Activated CD4-positive, alpha-beta T cell treated with anti-CD3 and anti-CD28 coated beads for 36 hours (primary cell): ENCODE measurements at regions of chr6 and their contacts with region 1.

Region 1: DNA sequence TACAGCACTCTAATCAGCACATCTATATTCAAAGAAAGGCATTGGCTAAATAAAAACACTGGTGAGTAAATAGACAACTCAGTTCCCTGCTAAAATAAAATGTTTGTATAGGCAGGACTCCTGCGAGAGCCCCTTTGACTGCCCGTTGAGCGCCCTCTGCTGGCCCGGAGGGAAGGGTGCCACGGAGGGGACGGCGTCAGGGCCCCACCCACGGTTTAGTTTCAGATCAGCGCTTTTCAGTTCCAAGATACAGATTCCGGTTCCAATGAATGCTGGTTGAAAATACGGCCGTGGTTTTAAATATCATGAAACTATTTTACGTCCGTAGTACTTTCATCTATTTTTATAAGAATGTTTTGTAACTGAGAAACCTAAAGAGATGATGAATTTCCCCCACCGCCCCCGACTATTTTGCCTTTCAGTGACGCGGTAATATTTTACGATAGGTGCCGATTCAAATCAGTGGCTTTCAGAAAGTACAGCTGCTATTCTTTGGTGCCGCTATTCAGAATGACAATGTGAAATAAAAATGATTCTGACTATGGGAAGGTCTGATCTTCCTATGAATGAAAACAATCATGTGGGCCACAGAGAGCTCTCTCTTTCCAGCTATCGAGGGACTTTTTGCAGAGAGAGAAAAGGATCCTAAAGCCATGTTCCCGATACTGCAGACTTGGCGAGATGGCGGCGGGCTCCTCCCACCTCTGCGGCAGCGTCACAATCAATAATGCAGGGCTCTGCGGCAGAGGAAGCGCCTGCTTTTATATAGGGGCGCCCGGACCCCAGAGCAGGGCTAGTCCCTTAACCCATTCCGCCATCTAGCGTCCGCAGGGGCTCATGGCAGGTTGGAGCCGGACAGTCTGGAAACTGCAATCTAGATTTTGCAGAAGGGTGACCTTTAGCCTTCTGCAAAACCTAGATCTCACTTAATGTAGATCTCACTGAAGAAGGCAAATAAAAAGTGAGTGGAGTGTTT is 10.6 kb upstream of the CCN6 start:
- DNase-seq: peak; percentile 96
- ATAC-seq: peak; percentile 91
- H3K4me3 Mint-ChIP-seq: peak overlapping the region; percentile 93
- H3K27ac Mint-ChIP-seq: peak overlapping the region; percentile 98
- H3K4me1 Mint-ChIP-seq: peaks cover 50% of the 10 kb centered on the region
- H3K27me3 Mint-ChIP-seq: no peaks in the 10 kb centered on the region

Region 2: GRCh38 chr6:111011360-111012142 is 1031.8 kb before region 1 on chr6:
- CTCF ChIA-PET with region 1: interaction called, 4 read pairs
- POLR2A ChIA-PET with region 1: no interaction called
- intact Hi-C with region 1: loop called in 1 of 2 experiments (anchors 5 kb)
- DNase-seq: no peak
- ATAC-seq: peak; percentile 73
- H3K4me3 Mint-ChIP-seq: no peak overlapping the region
- H3K27ac Mint-ChIP-seq: no peak overlapping the region
- H3K4me1 Mint-ChIP-seq: peaks cover 4% of the 10 kb centered on the region
- H3K27me3 Mint-ChIP-seq: no peaks in the 10 kb centered on the region

Region 3: GRCh38 chr6:111668410-111668809 is 374.9 kb before region 1 on chr6:
- CTCF ChIA-PET with region 1: no interaction called
- POLR2A ChIA-PET with region 1: no interaction called
- intact Hi-C with region 1: loop called in 1 of 2 experiments (anchors 5 kb)
- DNase-seq: no peak
- ATAC-seq: no peak
- H3K4me3 Mint-ChIP-seq: no peak overlapping the region
- H3K27ac Mint-ChIP-seq: peak overlapping the region; percentile 35
- H3K4me1 Mint-ChIP-seq: peaks cover 6% of the 10 kb centered on the region
- H3K27me3 Mint-ChIP-seq: no peaks in the 10 kb centered on the region

Region 4: DNA sequence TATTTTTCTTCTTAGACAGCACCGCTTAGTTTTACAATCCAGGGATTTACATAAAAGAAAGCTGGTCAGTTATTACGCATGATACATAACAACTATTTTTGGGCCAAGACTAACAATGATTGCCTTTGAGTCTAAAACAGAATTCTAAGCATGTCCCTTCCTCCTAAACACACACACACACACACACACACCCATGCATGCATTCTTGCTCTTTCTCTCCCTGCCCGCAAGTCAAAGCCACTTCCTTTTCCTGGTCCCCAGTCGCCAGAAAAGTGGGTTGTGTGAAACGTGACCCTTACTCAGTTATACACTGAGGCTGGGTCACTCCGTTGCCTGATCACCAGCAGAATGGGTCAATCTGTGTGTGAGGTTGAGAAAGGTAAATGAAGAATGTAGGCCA is 201.5 kb before region 1 on chr6:
- CTCF ChIA-PET with region 1: interaction called, 14 read pairs
- POLR2A ChIA-PET with region 1: no interaction called
- intact Hi-C with region 1: loop called in 1 of 2 experiments (anchors 1 kb)
- DNase-seq: peak; percentile 67
- ATAC-seq: no peak
- H3K4me3 Mint-ChIP-seq: no peak overlapping the region
- H3K27ac Mint-ChIP-seq: no peak overlapping the region
- H3K4me1 Mint-ChIP-seq: peaks cover 63% of the 10 kb centered on the region
- H3K27me3 Mint-ChIP-seq: no peaks in the 10 kb centered on the region

Region 5: DNA sequence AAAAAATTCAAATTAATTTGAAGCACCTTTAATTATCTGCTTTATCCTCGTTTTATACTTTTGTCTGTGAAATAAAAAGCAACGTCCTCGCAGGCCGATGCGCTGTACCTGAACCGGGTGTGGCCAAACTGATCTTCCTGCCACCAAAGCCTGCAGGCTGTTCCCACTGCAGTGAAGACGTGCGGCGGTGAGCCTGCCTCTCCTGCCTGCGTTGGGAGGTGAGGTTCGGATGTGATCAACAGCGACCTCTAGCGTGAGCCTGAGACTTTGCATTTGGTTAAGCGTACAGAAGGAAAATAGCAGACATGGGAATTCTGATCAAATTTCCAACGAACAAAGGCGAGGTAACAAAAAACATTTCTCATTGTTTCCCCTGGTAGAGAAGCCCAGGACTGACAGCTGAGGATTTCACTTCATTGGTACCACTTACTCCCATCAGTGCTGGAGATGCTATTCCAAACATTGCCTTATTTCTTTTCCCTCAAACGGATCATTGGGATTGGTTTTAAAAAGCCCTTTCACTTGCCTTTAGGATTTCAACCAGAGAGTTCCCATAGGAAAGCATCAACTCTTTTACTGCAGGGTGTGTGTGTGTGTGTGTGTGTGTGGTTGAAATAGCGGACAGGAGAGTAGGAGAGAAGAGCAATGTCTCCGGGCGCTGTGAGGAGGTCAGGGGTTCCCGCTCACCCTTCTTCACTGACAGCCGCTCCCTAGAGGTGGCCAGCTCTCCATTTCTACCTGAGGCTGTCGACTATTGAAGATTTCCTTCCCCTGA is 46.1 kb before region 1 on chr6:
- CTCF ChIA-PET with region 1: interaction called, 9 read pairs
- POLR2A ChIA-PET with region 1: interaction called, 6 read pairs
- intact Hi-C with region 1: loop called (anchors 1 to 5 kb)
- DNase-seq: peak; percentile 89
- ATAC-seq: peak; percentile 71
- H3K4me3 Mint-ChIP-seq: peak overlapping the region; percentile 43
- H3K27ac Mint-ChIP-seq: peak overlapping the region; percentile 72
- H3K4me1 Mint-ChIP-seq: peaks cover 51% of the 10 kb centered on the region
- H3K27me3 Mint-ChIP-seq: no peaks in the 10 kb centered on the region

Region 6: DNA sequence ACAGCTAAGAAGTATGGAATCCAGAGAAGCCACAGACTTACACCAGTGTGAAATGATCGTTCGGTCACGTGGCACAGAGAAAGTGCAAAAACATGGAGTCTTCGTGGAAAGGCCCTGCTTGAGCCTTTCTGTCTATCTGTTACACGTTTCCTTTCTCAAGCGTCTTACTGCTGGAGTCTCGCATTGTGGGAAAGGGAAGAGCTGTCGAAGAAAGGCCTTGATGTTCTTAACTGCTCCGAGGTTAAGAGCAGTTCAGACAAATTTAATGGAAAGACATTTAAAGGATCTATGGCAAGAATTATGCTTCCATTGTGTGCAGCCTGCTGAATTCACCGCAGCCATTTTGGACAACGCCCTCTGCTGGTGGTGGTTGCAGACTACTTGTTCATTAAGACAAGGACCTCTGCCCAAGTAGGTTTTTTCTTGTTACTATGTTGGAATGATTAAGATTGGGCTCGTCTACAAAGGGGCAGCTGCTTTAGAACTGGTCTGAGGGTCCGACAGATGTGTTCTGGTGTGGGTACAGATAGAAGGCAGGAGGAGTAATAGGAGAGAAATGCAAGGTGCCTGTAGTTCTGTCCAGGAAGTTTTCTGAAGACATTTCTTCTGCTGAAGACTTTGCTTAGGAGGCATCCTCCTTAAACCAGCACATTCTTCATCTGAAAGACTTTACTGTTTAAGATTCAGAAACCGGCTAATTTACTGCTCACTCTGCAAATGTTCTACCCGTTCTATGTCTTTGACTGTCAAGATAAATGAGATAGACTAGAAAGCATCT is 14.1 kb before region 1 on chr6:
- CTCF ChIA-PET with region 1: interaction called, 61 read pairs
- POLR2A ChIA-PET with region 1: no interaction called
- intact Hi-C with region 1: loop called in 1 of 2 experiments (anchors 1 kb)
- DNase-seq: peak; percentile 90
- ATAC-seq: peak; percentile 20
- H3K4me3 Mint-ChIP-seq: no peak overlapping the region
- H3K27ac Mint-ChIP-seq: peak overlapping the region; percentile 87
- H3K4me1 Mint-ChIP-seq: peaks cover 76% of the 10 kb centered on the region
- H3K27me3 Mint-ChIP-seq: no peaks in the 10 kb centered on the region

Region 7: GRCh38 chr6:112100561-112100960 is 57.2 kb after region 1 on chr6:
- CTCF ChIA-PET with region 1: no interaction called
- POLR2A ChIA-PET with region 1: no interaction called
- intact Hi-C with region 1: no loop called
- DNase-seq: no peak
- ATAC-seq: no peak
- H3K4me3 Mint-ChIP-seq: no peak overlapping the region
- H3K27ac Mint-ChIP-seq: no peak overlapping the region
- H3K4me1 Mint-ChIP-seq: peaks cover 3% of the 10 kb centered on the region
- H3K27me3 Mint-ChIP-seq: peaks cover 5% of the 10 kb centered on the region

Region 8: GRCh38 chr6:112710706-112711105 is 667.4 kb after region 1 on chr6:
- CTCF ChIA-PET with region 1: no interaction called
- POLR2A ChIA-PET with region 1: no interaction called
- intact Hi-C with region 1: no loop called
- DNase-seq: no peak
- ATAC-seq: no peak
- H3K4me3 Mint-ChIP-seq: no peak overlapping the region
- H3K27ac Mint-ChIP-seq: no peak overlapping the region
- H3K4me1 Mint-ChIP-seq: no peaks in the 10 kb centered on the region
- H3K27me3 Mint-ChIP-seq: no peaks in the 10 kb centered on the region

Region 9: DNA sequence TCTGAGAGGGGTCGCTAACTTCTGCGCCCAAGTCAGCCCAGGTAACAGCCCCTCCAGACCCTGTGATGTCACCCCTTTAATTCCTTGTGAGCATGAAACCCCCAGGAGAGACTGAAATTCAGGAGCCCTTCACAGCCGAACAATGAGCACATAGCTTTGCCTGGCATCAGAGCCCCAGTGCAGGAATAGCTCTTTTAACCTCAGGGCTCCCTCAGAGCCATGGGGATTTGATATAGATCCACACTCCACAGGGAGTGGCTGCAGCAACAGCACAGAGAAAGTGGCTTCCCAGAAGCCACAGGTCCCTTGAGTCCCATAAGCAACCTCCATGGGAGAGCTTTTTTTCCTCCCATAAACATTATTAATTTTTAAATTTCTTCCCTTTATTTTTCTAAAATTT is 1663.9 kb after region 1 on chr6:
- CTCF ChIA-PET with region 1: no interaction called
- POLR2A ChIA-PET with region 1: no interaction called
- intact Hi-C with region 1: no loop called
- DNase-seq: no peak
- ATAC-seq: no peak
- H3K4me3 Mint-ChIP-seq: no peak overlapping the region
- H3K27ac Mint-ChIP-seq: no peak overlapping the region
- H3K4me1 Mint-ChIP-seq: no peaks in the 10 kb centered on the region
- H3K27me3 Mint-ChIP-seq: no peaks in the 10 kb centered on the region